Activated CD8-positive, alpha-beta memory T cell treated with anti-CD3 and anti-CD28 coated beads, Interleukin-2, amount 10 ng/mL, durations not matched to agents 7 days and 5 days (primary cell): ENCODE measurements at regions of chr16 and their contacts with region 1.

Region 1: DNA sequence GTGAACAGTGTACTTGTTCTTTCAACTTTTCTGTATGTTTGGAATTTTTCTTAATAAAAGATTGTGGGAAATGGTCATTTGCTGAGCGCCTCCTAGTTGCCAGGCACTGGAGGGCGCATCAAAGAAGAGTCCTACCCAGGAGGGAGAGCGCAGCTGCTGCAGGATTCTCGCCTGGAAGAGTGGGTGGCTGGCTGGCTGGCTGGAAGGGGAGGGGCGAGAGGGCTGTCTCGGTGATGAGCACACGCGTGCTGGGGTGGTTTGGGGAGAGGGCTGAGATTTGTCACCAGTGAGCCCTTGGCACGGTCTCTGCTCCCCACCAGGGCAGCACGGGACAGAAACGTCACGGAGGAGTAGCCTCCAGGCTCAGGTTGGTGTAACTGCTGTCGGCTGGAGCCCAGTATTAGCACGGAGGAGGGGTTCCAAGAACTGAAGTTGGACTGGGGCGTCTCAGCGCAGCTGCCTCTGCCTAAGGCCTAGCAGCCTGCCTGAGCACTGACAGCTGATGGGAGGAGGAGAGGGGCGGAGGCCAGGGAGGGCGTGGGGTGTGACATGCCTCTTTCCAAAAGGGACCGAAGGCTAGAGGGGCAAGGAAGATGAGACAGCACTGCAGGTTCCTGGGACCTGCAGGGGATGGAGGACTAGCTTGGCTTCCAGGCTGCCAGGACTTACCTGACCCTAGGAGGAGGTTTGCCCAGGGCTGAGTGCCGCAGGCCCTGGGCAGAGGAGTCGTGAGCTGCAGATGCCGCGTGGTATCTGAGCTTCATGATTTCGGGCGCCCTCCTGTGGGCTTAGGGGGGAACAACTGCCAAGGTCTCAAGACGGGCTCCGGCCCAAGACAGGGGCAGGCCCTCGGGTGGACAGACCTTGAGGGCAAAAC is 5.7 kb downstream of the LDHD start:
- DNase-seq: peak; percentile 89
- ATAC-seq: peak; percentile 85
- H3K4me3 Mint-ChIP-seq: peak overlapping the region; percentile 36
- H3K27ac Mint-ChIP-seq: peak overlapping the region; percentile 72
- H3K4me1 Mint-ChIP-seq: peaks cover 51% of the 10 kb centered on the region
- H3K27me3 Mint-ChIP-seq: no peaks in the 10 kb centered on the region

Region 2: GRCh38 chr16:74700438-74701225 is 410.2 kb before region 1 on chr16 and contains the start of gene MLKL:
- CTCF ChIA-PET with region 1: interaction called, 12 read pairs
- DNase-seq: peak; percentile 79
- ATAC-seq: peak; percentile 75
- H3K4me3 Mint-ChIP-seq: peak within 1 kb of the TSS; percentile 96
- H3K27ac Mint-ChIP-seq: peak within 1 kb of the TSS; percentile 100
- H3K4me1 Mint-ChIP-seq: peaks cover 57% of the 10 kb centered on the region
- H3K27me3 Mint-ChIP-seq: no peaks in the 10 kb centered on the region
- total RNA-seq, gene MLKL: 26.1 to 35.5 TPM

Region 3: DNA sequence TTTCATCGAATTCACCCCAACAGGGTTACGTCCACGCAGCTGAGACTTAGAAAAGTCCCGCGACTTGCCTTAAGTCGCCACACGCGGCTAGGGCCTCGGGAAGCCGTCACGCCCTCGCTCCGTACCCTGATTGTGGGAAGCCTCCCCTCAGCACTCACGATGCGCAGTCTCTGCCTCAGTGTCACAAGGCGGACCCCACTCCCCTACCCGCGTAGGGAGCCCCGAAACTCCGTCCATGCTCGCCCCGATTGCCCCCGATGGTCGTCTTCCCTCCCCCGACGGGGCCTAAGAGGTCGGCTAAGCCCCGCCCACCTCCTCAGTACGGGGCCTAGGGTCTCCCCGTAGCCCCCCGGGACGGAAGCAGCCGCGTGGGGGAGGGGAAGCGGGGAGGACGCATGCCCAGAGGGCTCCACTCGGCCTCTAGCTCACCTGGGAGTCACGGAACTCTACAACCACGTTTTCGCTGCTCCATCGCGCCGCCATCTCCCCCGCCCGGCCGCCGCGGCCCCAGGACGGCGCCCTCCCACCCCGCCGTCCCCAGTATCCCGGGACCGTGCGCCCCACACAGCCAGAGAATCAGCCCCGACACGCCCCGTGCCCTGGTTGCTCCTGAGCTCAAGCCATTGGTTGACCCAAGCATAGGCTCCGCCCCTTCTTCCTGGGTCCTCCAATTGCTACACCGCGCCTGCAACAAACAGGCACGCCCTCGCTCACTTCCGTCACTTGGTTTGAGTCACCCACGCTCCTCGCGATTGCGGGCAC is 126.2 kb before region 1 on chr16 and contains the start of gene WDR59:
- CTCF ChIA-PET with region 1: interaction called, 28 read pairs
- DNase-seq: peak; percentile 100
- ATAC-seq: peak; percentile 100
- H3K4me3 Mint-ChIP-seq: peak within 1 kb of the TSS; percentile 85
- H3K27ac Mint-ChIP-seq: peak within 1 kb of the TSS; percentile 89
- H3K4me1 Mint-ChIP-seq: peaks cover 14% of the 10 kb centered on the region
- H3K27me3 Mint-ChIP-seq: no peaks in the 10 kb centered on the region
- total RNA-seq, gene WDR59: 59.0 to 74.6 TPM

Region 4: DNA sequence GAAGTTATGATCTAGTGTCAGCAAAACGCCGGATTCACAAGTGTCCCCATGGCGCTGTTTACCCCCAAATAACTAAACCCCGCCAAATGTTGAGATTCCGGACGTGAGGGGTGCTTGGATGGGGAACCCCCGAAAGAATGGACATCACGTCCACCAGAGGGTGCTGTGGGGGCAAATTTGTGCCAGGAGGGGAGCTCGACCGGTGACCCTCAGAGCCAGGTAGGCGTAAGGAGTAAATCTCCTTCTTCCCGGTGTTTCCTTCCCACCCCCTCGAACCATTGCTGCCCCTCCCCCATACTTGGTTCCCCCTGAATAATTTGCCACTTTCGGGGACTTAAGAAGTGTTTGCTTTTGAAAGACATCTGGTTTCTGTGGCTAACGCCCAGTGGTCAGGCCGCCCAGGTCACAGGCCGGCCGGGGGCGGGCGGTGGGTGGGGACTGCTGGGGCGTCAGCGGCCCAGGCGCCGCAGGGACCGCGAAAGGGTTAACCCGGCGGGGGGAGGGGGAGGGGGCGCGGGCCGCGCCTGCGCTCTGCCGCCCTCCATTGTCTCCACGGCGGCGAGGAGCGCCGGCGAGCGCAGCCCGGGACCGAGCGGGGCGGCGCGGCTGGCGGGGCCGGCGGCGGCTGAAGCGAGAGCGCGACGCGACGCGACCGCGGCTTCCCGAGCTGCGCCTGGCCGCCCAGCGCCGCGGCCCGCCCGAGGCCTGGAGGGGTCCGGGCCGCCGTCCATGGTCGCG is 112.2 kb before region 1 on chr16 and contains the start of gene ZNRF1:
- CTCF ChIA-PET with region 1: interaction called, 150 read pairs
- DNase-seq: peak; percentile 91
- ATAC-seq: peak; percentile 86
- H3K4me3 Mint-ChIP-seq: peak within 1 kb of the TSS; percentile 77
- H3K27ac Mint-ChIP-seq: peak within 1 kb of the TSS; percentile 77
- H3K4me1 Mint-ChIP-seq: peaks cover 33% of the 10 kb centered on the region
- H3K27me3 Mint-ChIP-seq: peaks cover 24% of the 10 kb centered on the region
- total RNA-seq, gene ZNRF1: 16.1 to 22.5 TPM

Region 5: DNA sequence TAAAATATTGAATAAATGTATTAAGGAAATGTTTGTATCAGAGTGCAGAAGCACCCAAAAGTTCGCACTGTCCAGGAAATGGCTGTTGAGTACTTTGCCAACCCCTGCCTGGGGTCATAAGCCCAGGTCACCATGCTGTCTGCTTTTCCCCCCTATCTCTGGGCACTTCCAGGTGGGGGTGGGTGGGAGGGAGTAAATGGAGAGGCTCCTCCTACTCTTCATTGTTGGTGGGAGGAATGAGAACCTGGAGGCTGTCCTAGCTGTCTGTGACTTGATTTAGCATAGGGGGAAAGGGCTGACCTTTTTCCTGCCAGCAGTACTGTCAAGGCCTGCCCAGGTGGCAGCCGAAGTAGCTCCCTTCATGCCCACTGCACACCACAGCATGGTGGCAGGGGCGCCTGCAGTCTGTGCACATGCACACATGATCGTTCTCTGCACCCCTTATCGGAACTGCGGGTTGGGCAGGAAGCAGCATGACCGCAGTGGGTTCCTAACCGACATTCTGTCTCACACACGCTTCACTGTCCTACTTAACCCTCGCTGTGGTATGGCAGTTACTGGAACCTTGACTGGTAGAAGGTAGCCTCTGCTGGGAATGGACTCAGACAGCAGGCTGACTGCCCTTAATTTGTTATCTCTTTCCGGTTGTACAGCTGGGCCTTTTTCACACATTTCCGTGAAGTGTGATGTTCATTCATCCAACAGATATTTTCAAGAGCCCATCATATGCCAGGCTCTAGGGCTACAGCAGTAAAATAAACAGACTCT is 35.8 kb before region 1 on chr16:
- CTCF ChIA-PET with region 1: interaction called, 57 read pairs
- DNase-seq: peak; percentile 96
- ATAC-seq: peak; percentile 94
- H3K4me3 Mint-ChIP-seq: peak overlapping the region; percentile 33
- H3K27ac Mint-ChIP-seq: peak overlapping the region; percentile 85
- H3K4me1 Mint-ChIP-seq: peaks cover 55% of the 10 kb centered on the region
- H3K27me3 Mint-ChIP-seq: no peaks in the 10 kb centered on the region